Caco-2 (cell line): ENCODE measurements at regions of chr6 and their contacts with region 1.

Region 1: DNA sequence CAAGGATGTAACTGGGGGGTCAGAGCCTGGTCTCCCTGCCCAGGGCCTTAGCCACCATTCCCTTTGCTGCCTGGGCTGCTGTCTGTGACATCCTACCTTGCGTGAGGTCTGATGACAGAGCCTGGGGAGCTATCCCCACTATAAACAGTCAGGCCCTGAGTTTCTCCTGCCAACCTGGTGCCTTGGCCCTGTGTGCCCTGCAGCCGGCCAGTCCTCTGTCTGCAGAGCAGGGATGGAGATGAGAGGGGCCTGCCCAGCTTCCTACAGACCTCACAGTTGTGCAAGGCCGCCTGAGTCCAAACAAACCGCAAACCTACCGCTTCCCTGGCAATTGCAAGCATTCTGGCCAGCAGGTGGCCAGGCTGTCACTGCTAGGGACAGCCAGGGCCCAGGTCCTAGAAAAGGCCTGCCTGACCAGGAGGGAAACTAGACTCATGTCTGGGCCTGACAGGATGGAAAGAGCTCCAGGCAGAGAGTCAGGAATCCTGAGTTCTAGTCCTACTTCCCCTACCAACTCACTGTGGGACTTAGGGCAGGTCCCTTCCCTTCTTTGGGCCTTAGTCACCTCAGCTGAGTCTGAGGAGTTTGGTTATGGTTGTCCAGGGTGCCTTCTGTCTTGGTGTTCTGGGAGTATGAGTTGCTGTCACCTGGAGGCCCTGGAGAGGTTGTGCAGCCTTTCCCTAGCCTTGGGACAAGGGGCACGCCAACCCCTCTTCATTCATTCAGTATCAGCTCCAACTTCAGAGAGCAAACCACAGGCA is 86.2 kb downstream of the VEGFA start:
- DNase-seq: peak; percentile 72 to 77
- H3K4me3 ChIP-seq: no peak overlapping the region
- H3K4me3 Mint-ChIP-seq: no peak overlapping the region
- H3K27ac Mint-ChIP-seq: peak overlapping the region; percentile 54
- H3K4me1 ChIP-seq: peaks cover 24% of the 10 kb centered on the region
- H3K4me1 Mint-ChIP-seq: peaks cover 14% of the 10 kb centered on the region
- H3K27me3 ChIP-seq: no peaks in the 10 kb centered on the region
- H3K27me3 Mint-ChIP-seq: no peaks in the 10 kb centered on the region
- CTCF ChIP-seq: peak; percentile 55 to 76

Region 2: DNA sequence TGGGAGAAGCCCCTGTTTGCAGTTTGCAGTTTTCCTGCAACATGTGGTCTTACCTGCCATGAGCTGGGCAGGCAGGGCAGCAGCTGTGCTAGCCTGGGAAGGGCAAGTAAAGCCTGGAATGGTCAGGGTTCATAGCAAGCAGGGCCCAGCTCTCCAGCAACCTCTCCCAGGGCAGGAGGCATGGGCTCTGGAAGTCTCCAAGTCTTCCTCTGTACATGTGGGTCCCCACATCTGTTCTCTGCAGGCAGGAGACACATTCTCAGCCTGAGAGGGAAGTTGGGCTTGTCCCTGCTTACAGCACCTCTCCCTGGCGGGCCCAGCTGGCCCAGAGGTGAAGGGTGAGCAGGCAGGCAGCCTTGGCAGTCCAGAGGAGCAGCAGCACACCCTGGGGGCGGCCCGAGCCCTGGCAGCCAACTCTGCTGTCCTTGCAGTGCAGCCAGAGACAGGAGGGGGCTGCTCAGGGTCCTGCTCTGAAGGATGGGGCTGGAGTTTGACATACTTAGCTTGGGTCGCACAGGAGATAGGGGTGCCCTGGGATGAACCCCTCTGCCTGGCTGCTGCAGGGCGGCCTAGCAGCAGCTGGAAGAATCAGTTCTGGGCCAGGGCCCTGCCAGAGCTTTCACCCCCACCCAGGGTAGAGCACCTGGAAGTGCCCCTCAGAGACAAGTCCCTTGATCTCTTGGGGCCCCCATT is 95.0 kb after region 1 on chr6:
- CTCF ChIA-PET with region 1: interaction called, 11 read pairs
- POLR2A ChIA-PET with region 1: no interaction called
- intact Hi-C with region 1: loop called (anchors 1 kb)
- DNase-seq: peak; percentile 75 to 82
- H3K4me3 ChIP-seq: no peak overlapping the region
- H3K4me3 Mint-ChIP-seq: no peak overlapping the region
- H3K27ac Mint-ChIP-seq: no peak overlapping the region
- H3K4me1 ChIP-seq: 0 out of 2 replicates have a peak, but pooled peaks cover 3% of the 10 kb centered on the region
- H3K4me1 Mint-ChIP-seq: no peaks in the 10 kb centered on the region
- H3K27me3 ChIP-seq: no peaks in the 10 kb centered on the region
- H3K27me3 Mint-ChIP-seq: no peaks in the 10 kb centered on the region
- CTCF ChIP-seq: peak; percentile 59 to 89

Region 3: DNA sequence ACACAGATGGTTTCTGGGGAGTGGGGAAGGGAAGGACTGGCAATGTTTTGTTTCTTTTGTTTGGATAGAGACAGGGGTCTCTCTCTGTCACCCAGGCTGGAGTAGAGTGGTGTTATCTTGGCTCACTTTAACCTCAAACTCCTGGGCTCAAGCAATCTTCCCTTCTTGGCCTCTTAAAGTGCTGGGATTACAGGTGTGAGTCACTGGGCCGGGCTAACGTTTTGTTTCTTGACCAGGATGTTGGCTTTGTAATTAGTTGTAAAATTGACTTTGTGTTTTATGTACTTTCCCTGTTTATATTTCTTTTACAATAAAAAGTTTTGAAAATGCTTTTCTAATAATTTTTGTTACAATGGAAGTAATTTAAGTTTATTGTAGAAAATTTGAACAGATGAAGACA is 497.2 kb after region 1 on chr6:
- CTCF ChIA-PET with region 1: no interaction called
- POLR2A ChIA-PET with region 1: no interaction called
- intact Hi-C with region 1: no loop called
- DNase-seq: no peak
- H3K4me3 ChIP-seq: no peak overlapping the region
- H3K4me3 Mint-ChIP-seq: no peak overlapping the region
- H3K27ac Mint-ChIP-seq: no peak overlapping the region
- H3K4me1 ChIP-seq: no peaks in the 10 kb centered on the region
- H3K4me1 Mint-ChIP-seq: peaks cover 7% of the 10 kb centered on the region
- H3K27me3 ChIP-seq: no peaks in the 10 kb centered on the region
- H3K27me3 Mint-ChIP-seq: peaks cover 9% of the 10 kb centered on the region
- CTCF ChIP-seq: no peak